Activated CD4-positive, alpha-beta T cell treated with anti-CD3 and anti-CD28 coated beads, Interleukin-2, amount 10 ng/mL, durations not matched to agents 24 days and 14 days (primary cell): ENCODE measurements at regions of chr7 and their contacts with region 1.

Region 1: DNA sequence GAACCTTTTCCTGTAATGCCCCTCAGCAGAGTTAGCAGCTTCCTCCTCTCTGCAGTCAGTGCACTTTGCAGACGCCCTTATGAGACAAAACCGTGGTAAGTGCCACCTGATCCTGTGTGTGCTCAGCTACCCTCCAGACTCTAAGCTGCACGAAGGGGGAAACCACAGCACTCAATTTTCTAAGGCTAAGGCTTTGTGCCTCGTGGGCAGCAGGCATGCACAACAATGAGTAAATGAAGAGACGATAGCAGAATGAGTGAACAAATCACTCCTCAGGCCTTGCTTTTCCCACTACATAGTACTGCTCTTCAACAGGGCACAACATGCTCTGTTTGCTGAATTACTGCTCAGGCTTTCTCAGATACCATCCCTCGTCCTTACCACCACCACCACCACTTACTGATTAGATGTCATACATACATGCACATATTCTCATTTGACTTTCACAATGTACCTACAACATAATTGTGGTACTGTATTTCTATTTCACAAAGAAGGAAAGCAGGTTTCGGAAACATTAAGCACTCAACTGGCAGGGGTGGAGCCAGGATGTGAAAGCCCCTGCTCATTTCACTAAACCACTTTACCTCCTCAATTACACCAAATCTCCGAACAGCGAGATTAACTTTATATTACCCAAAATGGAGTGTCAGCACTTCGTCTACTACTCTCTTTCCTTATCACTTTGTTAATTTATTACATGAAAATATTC is 85.4 kb downstream of the ICA1 start:
- DNase-seq: peak; percentile 89
- H3K4me3 Mint-ChIP-seq: peak overlapping the region; percentile 78
- H3K27ac Mint-ChIP-seq: peak overlapping the region; percentile 93
- H3K4me1 Mint-ChIP-seq: peaks cover 40% of the 10 kb centered on the region
- H3K27me3 Mint-ChIP-seq: no peaks in the 10 kb centered on the region

Region 2: GRCh38 chr7:8044761-8045430 is 131.6 kb before region 1 on chr7:
- intact Hi-C with region 1: loop called (anchors 2 kb)
- DNase-seq: no peak
- H3K4me3 Mint-ChIP-seq: peak overlapping the region; percentile 33
- H3K27ac Mint-ChIP-seq: peak overlapping the region; percentile 75
- H3K4me1 Mint-ChIP-seq: peaks cover 60% of the 10 kb centered on the region
- H3K27me3 Mint-ChIP-seq: no peaks in the 10 kb centered on the region